AG04450 (cell line): ENCODE measurements at regions of chr2 and their contacts with region 1.

Region 1: DNA sequence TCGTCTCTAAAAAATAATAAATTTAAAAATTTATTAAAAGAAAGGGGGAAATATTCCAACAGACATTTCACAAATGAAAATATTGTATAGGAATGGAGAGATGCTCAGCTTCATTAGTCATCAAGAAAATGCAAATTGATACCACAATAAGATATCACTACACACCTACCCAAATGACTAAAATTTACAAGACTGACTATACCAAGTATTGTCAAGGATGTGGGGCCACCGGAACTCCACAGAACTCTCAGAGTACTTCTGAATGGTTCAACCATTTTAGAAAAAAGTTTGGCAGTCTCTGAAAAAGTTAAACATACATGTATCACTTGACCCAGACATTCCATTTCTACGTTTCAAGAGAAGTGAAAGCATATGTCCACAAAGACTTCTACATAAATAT is 163.4 kb downstream of the EHBP1 start:
- DNase-seq: no peak
- H3K4me3 ChIP-seq: no peak overlapping the region
- H3K27ac ChIP-seq: no peak overlapping the region
- H3K27me3 ChIP-seq: no peaks in the 10 kb centered on the region
- CTCF ChIP-seq: no peak

Region 2: DNA sequence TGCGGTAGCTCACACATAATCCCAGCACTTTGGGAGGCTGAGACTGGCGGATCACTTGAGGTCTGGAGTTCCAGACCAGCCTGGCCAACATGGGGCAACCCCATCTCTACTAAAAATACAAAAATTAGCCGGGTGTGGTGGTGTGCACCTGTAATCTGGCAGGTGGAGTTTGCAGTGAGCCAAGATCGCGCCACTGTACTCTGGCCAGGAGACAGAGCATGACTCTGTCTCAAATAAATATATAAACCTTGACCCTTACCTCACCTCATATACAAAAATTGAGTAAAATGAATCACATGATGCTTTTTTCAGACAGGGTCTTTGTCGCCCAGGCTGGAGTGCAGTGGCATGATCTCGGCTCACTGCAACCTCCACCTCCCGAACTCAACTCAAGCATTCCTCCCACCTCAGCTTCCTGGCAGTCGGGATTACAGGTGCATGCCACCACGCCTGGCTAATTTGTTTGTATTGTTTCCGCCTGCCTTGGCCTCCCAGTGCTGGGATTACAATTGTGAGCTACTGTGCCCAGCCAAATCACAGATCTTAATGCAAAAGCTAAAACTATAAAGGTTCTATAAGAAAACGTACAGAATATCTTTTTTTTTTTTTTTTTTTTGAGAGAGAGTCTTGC is 1356.1 kb before region 1 on chr2:
- CTCF ChIA-PET with region 1: interaction called, 10 read pairs
- POLR2A ChIA-PET with region 1: no interaction called
- DNase-seq: no peak
- H3K4me3 ChIP-seq: no peak overlapping the region
- H3K27ac ChIP-seq: no peak overlapping the region
- H3K27me3 ChIP-seq: no peaks in the 10 kb centered on the region
- CTCF ChIP-seq: no peak

Region 3: DNA sequence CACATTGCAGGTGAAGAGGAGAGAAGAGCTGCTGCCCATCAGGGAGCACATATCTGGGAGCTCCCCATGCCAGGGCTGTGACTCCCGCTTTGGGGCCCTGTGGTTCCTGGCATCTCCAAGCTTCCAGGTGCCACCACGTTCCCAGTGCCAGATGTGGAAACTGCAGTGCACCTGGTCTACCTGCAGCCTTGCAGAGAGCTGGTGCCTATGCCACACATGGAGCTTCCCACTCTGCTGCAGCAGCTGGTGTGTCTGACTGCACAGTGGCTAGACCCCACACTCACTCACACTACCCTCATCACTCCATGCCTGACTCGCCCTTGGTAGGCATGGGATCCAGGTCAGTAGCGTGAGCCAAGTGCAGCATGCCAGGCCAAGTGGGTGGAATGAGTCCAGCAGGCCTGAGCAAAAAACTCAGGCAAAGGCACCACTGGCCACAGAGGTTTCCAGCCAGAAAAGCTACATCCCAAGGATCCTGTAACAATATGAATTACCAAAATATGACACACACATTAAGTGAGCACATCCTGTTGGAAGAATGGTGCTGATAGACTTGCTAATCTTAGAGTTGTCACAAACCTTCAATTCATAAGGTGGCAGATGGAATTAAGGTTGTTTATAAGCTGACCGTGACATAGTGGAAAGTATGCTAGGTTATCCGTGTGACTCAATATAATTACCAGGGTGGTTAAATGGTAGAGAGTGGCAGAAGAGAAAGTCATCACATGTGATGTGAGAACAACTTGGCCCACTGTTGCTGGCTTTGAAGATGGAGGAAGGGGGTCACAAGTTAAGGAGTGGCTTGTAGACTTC is 12.5 kb before region 1 on chr2:
- CTCF ChIA-PET with region 1: no interaction called
- POLR2A ChIA-PET with region 1: no interaction called
- DNase-seq: no peak
- H3K4me3 ChIP-seq: no peak overlapping the region
- H3K27ac ChIP-seq: no peak overlapping the region
- H3K27me3 ChIP-seq: no peaks in the 10 kb centered on the region
- CTCF ChIP-seq: no peak